HEK293 (cell line): ENCODE measurements at regions of chr10 and their contacts with region 1.

Region 1: DNA sequence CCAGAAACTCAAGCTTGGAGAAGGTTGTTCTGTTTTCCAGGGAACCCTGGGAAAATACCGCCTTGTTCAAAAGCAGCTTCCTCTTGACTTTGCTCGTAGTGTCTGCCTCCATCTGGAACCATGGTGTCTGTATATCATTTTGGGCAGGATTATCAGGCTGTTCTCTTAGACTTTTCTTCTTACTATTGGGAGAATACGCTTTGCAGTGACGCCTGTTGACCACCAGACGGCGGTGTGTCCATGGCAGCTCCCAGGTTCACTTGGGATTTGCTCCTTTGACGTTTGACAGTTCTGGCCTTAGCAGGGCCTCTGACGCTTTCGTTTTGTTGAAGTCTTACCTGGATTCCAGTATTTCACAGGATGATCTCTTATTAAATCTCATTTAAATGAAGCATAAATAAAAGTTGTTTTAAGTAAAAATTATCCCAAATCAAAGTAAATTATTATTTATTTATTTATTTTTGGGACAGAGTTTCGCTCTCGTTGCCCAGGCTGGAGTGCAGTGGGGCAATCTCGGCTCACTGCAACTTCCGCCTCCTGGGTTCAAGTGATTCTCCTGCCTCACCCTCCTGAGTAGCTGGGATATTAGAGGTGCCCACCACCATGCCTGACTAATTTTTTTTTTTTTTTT is 41.8 kb upstream of the GJD4 start:
- H3K4me3 ChIP-seq: no peak overlapping the region
- H3K27ac ChIP-seq: no peak overlapping the region
- H3K4me1 ChIP-seq: no peaks in the 10 kb centered on the region
- CTCF ChIP-seq: peak; percentile 69

Region 2: DNA sequence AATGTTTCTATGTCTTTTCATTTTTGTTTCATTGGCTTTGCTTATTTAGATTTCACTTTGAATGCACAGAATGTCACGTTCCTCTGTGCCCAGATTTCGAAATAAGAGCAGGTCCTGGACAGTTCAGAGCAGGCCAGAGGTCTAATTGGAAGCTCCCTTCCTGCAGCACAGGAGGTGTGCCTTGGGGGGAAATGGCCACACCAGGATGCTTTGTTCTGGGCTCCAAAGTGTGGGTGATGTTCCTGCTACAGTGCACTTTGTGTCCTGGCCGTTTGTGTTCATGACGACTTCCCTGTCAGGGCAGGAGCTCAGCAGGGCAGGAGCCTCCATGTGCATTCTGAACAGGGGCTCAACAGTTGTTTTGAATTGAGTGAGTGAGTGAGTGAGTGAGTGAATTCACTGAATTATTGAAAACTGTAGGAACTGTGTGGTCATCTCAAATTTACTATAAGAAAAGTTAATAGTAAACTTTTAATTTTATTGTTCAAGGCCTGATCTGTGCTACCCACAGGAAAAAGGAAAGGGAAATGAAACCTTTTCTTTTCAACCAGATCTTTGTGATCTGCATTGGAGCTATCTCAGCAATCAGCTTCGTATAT is 67.8 kb before region 1 on chr10:
- CTCF ChIA-PET with region 1: no interaction called
- POLR2A ChIA-PET with region 1: no interaction called
- H3K4me3 ChIP-seq: no peak overlapping the region
- H3K27ac ChIP-seq: no peak overlapping the region
- H3K4me1 ChIP-seq: peaks cover 21% of the 10 kb centered on the region
- CTCF ChIP-seq: no peak

Region 3: GRCh38 chr10:35533565-35533964 is 29.8 kb before region 1 on chr10:
- CTCF ChIA-PET with region 1: interaction called, 14 read pairs
- POLR2A ChIA-PET with region 1: no interaction called
- H3K4me3 ChIP-seq: no peak overlapping the region
- H3K27ac ChIP-seq: no peak overlapping the region
- H3K4me1 ChIP-seq: no peaks in the 10 kb centered on the region
- CTCF ChIP-seq: no peak

Region 4: DNA sequence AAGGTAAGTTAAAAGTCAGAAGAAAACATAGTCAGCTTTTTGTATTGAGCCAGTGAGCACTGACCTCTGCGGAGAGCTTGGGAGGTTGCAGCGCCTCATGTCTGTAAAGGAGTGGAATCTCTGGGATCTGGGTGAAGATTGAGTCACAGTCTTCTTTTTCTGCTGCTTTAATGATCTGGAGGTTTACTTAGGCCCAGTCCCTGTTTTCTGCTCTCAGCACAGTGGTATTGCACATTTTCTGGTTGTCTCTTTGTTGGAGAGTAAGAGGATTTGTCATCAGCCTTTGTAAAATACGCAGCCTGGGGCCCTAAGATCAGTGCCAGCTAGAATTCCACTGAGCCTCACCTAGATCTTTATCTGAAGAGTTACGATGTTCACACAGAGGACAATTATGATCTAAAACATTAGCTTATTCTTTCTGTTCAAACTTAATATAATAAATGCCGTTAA is 16.5 kb before region 1 on chr10:
- CTCF ChIA-PET with region 1: interaction called, 31 read pairs
- POLR2A ChIA-PET with region 1: no interaction called
- H3K4me3 ChIP-seq: no peak overlapping the region
- H3K27ac ChIP-seq: no peak overlapping the region
- H3K4me1 ChIP-seq: no peaks in the 10 kb centered on the region
- CTCF ChIP-seq: no peak

Region 5: DNA sequence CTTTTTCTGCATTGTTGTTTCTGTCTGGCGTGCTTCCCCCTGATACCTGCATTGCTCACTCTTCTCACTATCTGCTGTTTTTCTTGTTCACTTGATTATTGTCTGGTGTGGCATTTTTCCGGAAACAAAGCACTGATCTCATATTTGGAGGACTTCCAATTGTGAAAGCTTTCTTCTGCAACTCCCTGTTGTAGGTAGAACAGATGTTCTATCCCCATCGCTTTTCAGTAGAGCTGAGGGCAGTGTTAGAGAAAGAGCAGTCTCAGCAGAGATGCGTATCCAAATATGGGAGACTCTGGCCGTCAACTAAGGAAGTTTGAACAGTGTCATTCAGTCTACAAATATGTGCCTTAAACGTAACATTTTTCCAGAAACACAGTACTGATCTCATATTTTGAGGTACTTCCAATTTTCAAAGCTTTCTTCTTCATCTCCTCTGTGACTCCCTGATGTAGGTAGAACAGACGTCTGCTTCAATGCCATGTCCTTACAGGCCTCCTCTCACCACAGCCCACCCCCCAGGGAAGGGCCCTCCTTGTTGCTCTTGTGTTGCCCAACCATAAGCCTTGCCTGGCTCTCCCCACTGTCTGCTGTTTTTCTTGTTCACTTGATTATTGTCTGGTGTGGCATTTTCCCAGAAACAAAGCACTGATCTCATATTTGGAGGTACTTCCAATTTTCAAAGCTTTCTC is 14.7 kb after region 1 on chr10:
- CTCF ChIA-PET with region 1: interaction called, 10 read pairs
- POLR2A ChIA-PET with region 1: no interaction called
- H3K4me3 ChIP-seq: no peak overlapping the region
- H3K27ac ChIP-seq: no peak overlapping the region
- H3K4me1 ChIP-seq: no peaks in the 10 kb centered on the region
- CTCF ChIP-seq: no peak